ENCODE measurements at regions of chr22 and their contacts with region 1.

Region 1: GRCh38 chr22:36123673-36124630 is 36.6 kb downstream of the APOL3 start:
- DNase-seq: peak; percentile 94
- CTCF ChIP-seq: peak; percentile 98

Region 2: GRCh38 chr22:35914665-35915476 is 209.1 kb before region 1 on chr22:
- in situ Hi-C with region 1: no loop called
- DNase-seq: no peak
- CTCF ChIP-seq: no peak

Region 3: DNA sequence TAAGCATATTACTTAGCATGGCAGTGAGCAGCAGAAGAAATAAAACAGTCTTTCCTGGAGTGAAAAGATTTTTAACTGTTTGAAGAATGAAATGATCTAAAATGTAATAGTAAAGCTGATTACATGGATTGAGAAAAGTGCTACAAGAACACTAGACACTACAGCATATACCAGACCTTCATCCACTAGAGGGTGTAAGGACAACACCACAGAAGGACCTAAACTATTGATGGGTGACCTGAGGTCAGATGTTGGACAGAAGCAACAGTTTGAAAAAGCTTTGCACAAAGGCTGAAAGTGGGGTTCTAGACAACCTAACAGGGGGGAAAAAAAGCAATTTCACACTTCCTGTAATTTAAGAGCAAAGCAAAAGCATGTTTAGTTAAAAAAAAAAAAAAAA is 193.0 kb before region 1 on chr22:
- in situ Hi-C with region 1: loop called (anchors 10 kb)
- DNase-seq: peak; percentile 40
- CTCF ChIP-seq: peak; percentile 25